Gastrocnemius medialis (tissue), 4 donors: ENCODE measurements at regions of chr17 and their contacts with region 1.

Region 1: DNA sequence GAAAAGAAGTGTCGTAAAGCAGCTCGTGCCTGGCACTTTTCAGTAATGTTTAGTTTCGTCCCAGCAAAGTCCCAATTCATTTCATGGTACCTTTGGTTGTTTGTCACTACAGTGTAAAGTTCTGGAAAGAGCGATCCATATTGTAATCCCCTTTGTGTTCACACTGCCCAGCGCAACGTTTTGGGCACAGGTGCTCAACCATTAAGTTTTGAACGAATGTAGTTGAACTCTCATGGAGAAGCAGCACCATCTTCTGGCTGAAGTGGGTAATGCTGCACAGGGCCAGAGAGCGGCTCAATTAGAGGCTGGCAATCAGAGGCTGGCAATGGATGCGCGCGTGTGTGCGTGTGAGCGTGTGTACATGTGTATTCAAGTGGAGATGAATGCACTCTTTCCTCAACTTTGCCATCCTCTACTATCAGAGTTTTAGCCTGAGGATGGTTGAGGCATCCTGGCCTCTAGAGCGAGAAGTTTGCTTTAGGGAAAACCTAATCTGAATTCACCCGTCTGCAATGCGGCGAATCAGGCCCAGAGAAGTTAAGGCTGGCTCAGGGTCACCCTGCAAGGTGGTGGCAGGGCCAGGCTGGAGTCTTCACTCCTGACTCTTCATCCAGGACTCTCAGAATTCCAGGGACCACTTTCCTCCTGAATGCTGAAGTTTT is 29.9 kb downstream of the DYNLL2 start:
- DNase-seq: peak; percentile 40 to 62
- ATAC-seq: peak; percentile 90 to 94
- H3K4me3 ChIP-seq: no peak overlapping the region
- H3K27ac ChIP-seq: no peak overlapping the region
- H3K4me1 ChIP-seq: peaks cover 0 to 3% of the 10 kb centered on the region in 2 donors
- H3K27me3 ChIP-seq: no peaks in the 10 kb centered on the region
- CTCF ChIP-seq: peak; percentile 86 to 97 (median 92)
- POLR2A ChIP-seq: no peak

Region 2: GRCh38 chr17:57114085-57114673 is 998.9 kb before region 1 on chr17:
- in situ Hi-C with region 1: loop called in 1 of 4 experiments (anchors 25 kb)
- intact Hi-C with region 1: no loop called
- DNase-seq: no peak
- ATAC-seq: no peak
- H3K4me3 ChIP-seq: no peak overlapping the region
- H3K27ac ChIP-seq: peak overlapping the region; percentile 35 to 59 (median 50)
- H3K4me1 ChIP-seq: peaks cover 26 to 33% of the 10 kb centered on the region in 2 donors
- H3K27me3 ChIP-seq: no peaks in the 10 kb centered on the region
- CTCF ChIP-seq: peak; percentile 68 to 86 (median 81)
- POLR2A ChIP-seq: no peak

Region 3: GRCh38 chr17:57130761-57131461 is 982.2 kb before region 1 on chr17:
- in situ Hi-C with region 1: loop called in 2 of 4 experiments (anchors 25 kb)
- intact Hi-C with region 1: loop called (anchors 2 kb)
- DNase-seq: peak; percentile 67 to 79
- ATAC-seq: peak; percentile 94 to 98
- H3K4me3 ChIP-seq: peak overlapping the region in 2 of 4 donors; percentile 15 to 25
- H3K27ac ChIP-seq: no peak overlapping the region
- H3K4me1 ChIP-seq: peaks cover under 1 to 2% of the 10 kb centered on the region in 2 donors
- H3K27me3 ChIP-seq: no peaks in the 10 kb centered on the region
- CTCF ChIP-seq: peak; percentile 60 to 95 (median 78)
- POLR2A ChIP-seq: no peak

Region 4: GRCh38 chr17:57849874-57850754 is 263.0 kb before region 1 on chr17 and contains the start of gene MRPS23:
- in situ Hi-C with region 1: loop called in 3 of 4 experiments (anchors 5 to 10 kb)
- intact Hi-C with region 1: no loop called
- DNase-seq: peak; percentile 98 to 99
- ATAC-seq: peak; percentile 63 to 72
- H3K4me3 ChIP-seq: peak within 1 kb of the TSS; percentile 82 to 98 (median 88)
- H3K27ac ChIP-seq: peak within 1 kb of the TSS; percentile 91 to 98 (median 96)
- H3K4me1 ChIP-seq: peaks cover 52% of the 10 kb centered on the region in 2 donors
- H3K27me3 ChIP-seq: no peaks in the 10 kb centered on the region
- CTCF ChIP-seq: peak in 1 of 5 experiments; percentile 9
- POLR2A ChIP-seq: peak; percentile 83 to 87
- total RNA-seq, gene MRPS23: 24.3 to 47.2 (median 35.5) TPM

Region 5: GRCh38 chr17:57855391-57856035 is 257.6 kb before region 1 on chr17:
- in situ Hi-C with region 1: loop called in 3 of 4 experiments (anchors 5 to 10 kb)
- intact Hi-C with region 1: loop called (anchors 1 kb)
- DNase-seq: no peak
- ATAC-seq: no peak
- H3K4me3 ChIP-seq: no peak overlapping the region
- H3K27ac ChIP-seq: peak overlapping the region; percentile 91 to 98 (median 96)
- H3K4me1 ChIP-seq: peaks cover 38 to 46% of the 10 kb centered on the region in 2 donors
- H3K27me3 ChIP-seq: no peaks in the 10 kb centered on the region
- CTCF ChIP-seq: no peak
- POLR2A ChIP-seq: no peak

Region 6: GRCh38 chr17:58006924-58007780 is 105.9 kb before region 1 on chr17 and contains the start of gene SRSF1:
- in situ Hi-C with region 1: loop called (anchors 10 to 25 kb)
- intact Hi-C with region 1: loop called (anchors 1 kb)
- DNase-seq: peak; percentile 95 to 96
- ATAC-seq: peak; percentile 90 to 93
- H3K4me3 ChIP-seq: peak within 1 kb of the TSS; percentile 91 to 98 (median 97)
- H3K27ac ChIP-seq: peak within 1 kb of the TSS; percentile 96 to 100 (median 100)
- H3K4me1 ChIP-seq: peaks cover 47 to 48% of the 10 kb centered on the region in 2 donors
- H3K27me3 ChIP-seq: no peaks in the 10 kb centered on the region
- CTCF ChIP-seq: peak in 1 of 5 experiments; percentile 25
- POLR2A ChIP-seq: peak; percentile 97 to 98
- total RNA-seq, gene SRSF1: 69.4 to 85.4 (median 82.2) TPM

Region 7: GRCh38 chr17:58019039-58019438 is 94.1 kb before region 1 on chr17:
- in situ Hi-C with region 1: loop called in 3 of 4 experiments (anchors 10 to 25 kb)
- intact Hi-C with region 1: no loop called
- DNase-seq: no peak
- ATAC-seq: no peak
- H3K4me3 ChIP-seq: no peak overlapping the region
- H3K27ac ChIP-seq: no peak overlapping the region
- H3K4me1 ChIP-seq: no peaks in the 10 kb centered on the region
- H3K27me3 ChIP-seq: no peaks in the 10 kb centered on the region
- CTCF ChIP-seq: no peak
- POLR2A ChIP-seq: no peak